OCI-LY7 (cell line): ENCODE measurements at regions of chr16 and their contacts with region 1.

Region 1: GRCh38 chr16:52929478-52930400 is 123.0 kb downstream of the CHD9NB start:
- DNase-seq: no peak
- H3K4me3 ChIP-seq: no peak overlapping the region
- H3K27ac ChIP-seq: no peak overlapping the region
- H3K4me1 ChIP-seq: no peaks in the 10 kb centered on the region
- CTCF ChIP-seq: no peak

Region 2: GRCh38 chr16:52573365-52574299 is 356.1 kb before region 1 on chr16:
- CTCF ChIA-PET with region 1: no interaction called
- POLR2A ChIA-PET with region 1: no interaction called
- intact Hi-C with region 1: no loop called
- DNase-seq: no peak
- H3K4me3 ChIP-seq: no peak overlapping the region
- H3K27ac ChIP-seq: no peak overlapping the region
- H3K4me1 ChIP-seq: peaks cover 17% of the 10 kb centered on the region
- CTCF ChIP-seq: no peak

Region 3: GRCh38 chr16:53014287-53014686 is 84.5 kb after region 1 on chr16:
- CTCF ChIA-PET with region 1: no interaction called
- POLR2A ChIA-PET with region 1: no interaction called
- intact Hi-C with region 1: no loop called
- DNase-seq: no peak
- H3K4me3 ChIP-seq: no peak overlapping the region
- H3K27ac ChIP-seq: no peak overlapping the region
- H3K4me1 ChIP-seq: no peaks in the 10 kb centered on the region
- CTCF ChIP-seq: no peak

Region 4: DNA sequence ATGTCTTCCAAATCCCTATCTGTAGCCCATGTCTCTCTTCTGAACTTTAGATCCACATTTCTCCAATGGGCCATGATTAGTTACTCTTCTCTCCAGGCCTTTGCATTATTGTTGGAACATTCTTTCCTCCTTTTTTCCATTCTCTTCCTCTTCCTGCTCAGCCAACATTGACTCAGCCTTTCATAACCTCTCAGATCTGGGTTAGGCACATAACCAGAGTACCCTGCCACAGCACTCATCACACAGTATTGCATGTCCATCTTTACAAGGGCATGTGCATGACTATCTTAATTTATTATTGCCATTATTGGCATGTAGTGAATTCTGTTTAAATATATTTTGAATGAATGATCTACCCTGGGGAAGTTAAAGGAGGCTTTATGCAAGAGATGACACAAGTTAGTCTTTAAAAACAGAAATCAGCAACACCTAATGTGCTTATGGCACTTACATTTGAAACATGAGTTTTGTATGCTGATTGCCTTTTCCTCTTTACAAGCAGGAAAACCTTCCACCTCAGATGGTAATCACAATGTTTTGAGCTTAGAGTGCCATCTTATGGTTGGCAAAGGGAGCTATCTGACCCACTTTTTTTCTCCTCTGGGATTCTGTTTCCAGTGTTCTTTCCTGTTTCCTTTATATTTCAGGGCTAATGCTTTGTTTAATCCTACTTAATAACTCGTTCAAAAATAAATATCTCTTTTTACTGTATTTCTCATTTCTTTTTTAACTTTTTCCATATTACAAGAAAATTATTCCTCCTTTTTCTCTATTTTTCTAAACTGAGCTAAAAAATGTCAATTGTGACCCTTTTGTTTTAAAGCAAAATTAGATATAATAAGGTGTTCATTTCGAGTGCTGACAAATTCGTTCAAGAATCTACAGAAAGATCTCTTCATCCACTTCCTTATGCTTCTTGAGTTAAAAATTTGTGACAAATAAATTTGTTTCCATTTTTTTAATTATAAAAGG is 353.5 kb after region 1 on chr16:
- CTCF ChIA-PET with region 1: no interaction called
- POLR2A ChIA-PET with region 1: no interaction called
- intact Hi-C with region 1: loop called (anchors 10 kb)
- DNase-seq: peak; percentile 47
- H3K4me3 ChIP-seq: no peak overlapping the region
- H3K27ac ChIP-seq: no peak overlapping the region
- H3K4me1 ChIP-seq: no peaks in the 10 kb centered on the region
- CTCF ChIP-seq: peak; percentile 85